AG04449 (cell line): ENCODE measurements at regions of chr6 and their contacts with region 1.

Region 1: DNA sequence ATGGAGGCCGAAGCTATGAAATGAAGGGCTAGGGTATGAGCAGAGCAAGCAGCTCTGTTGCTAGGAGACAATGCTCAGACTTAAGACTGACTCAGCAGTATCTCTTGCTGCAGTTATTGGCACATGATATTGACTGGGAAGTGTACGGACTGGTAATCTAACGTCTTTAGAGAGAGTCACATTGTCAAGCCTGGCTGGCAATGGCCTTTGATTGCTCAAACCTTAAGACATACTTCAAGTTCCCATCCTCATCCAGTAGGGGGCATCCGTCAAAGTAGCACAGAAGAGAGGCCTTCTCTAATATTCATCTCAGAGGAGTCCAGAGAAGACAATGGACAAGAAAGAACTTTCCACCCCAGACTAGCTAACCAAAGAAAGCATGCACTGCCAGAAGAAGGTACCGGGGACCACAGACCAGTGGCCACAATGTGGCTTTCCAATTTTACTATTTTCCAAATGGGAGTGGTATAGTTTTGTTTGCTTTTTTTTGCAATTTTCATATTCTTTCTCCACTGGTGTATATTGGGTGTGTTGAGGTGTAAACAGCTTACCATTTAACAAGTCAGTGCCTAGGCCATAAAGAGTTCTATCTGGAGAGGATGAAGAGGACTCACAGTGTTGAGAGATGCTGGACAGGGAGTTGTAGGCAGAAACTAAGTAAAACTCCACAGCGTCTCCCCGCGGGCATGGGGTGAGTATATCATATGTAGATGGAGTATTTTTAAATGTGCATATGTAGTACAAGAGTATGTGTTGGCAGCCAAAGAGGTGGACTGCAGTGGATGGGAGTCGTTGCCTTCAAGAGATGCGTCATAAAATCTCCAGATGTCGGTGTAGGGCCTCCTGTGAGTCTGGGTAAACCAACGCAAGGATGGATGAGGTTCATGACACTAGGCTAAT is 36.7 kb downstream of the LRFN2 start:
- DNase-seq: peak; percentile 24
- H3K4me3 ChIP-seq: no peak overlapping the region
- CTCF ChIP-seq: peak; percentile 65

Region 2: GRCh38 chr6:40523505-40524172 is 26.8 kb before region 1 on chr6:
- CTCF ChIA-PET with region 1: no interaction called
- POLR2A ChIA-PET with region 1: no interaction called
- DNase-seq: no peak
- H3K4me3 ChIP-seq: no peak overlapping the region
- CTCF ChIP-seq: no peak

Region 3: GRCh38 chr6:40774932-40775331 is 224.5 kb after region 1 on chr6:
- CTCF ChIA-PET with region 1: no interaction called
- POLR2A ChIA-PET with region 1: no interaction called
- DNase-seq: no peak
- H3K4me3 ChIP-seq: no peak overlapping the region
- CTCF ChIP-seq: no peak

Region 4: GRCh38 chr6:40822619-40823018 is 272.2 kb after region 1 on chr6:
- CTCF ChIA-PET with region 1: interaction called, 14 read pairs
- POLR2A ChIA-PET with region 1: no interaction called
- DNase-seq: peak; percentile 36
- H3K4me3 ChIP-seq: no peak overlapping the region
- CTCF ChIP-seq: no peak

Region 5: GRCh38 chr6:40845553-40845952 is 295.1 kb after region 1 on chr6:
- CTCF ChIA-PET with region 1: interaction called, 26 read pairs
- POLR2A ChIA-PET with region 1: no interaction called
- DNase-seq: no peak
- H3K4me3 ChIP-seq: no peak overlapping the region
- CTCF ChIP-seq: peak; percentile 69